HEK293 (cell line): ENCODE measurements at regions of chr19 and their contacts with region 1.

Region 1: DNA sequence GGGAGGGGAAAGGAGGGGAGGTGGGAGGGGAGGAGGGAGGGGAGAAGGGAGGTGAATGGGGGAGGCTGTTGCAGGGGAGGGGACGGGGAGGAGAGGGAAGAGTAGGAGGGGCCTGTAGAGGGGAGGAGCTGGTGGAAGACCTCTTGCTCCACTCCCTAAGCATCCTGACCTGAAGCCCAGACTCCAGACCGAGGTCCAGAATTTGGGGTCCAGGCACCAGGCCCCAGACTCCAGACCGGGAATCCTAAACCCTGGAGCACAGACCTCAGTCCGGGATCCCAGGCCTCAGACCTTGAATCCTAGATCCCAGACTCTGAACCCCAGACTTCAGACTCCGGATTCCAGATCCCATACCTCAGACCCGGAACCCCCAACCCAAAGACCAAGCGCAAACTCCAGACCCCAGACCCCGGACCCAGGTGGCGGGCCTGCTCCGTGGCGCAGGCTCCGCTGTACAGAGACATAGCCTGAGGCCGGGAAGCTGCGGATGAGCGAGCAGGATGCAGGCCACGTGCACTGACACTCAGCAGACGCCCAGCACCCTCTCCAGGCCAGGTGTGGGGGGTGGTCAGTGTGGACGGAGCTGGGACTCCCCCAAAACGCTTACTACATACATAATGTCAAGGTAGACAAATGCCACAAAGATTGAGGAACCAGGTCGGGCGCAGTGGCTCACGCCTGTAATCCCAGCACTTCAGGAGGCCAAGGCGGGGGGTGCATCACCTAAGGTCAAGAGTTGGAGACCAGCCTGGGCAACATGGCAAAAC is 710 bp upstream of the BTBD2 start:
- H3K4me3 ChIP-seq: no peak overlapping the region
- H3K27ac ChIP-seq: 0 out of 2 replicates have a peak overlapping the region, but pooled peaks have one; percentile 16
- H3K4me1 ChIP-seq: no peaks in the 10 kb centered on the region
- CTCF ChIP-seq: no peak

Region 2: GRCh38 chr19:2041683-2042484 is 25.7 kb after region 1 on chr19:
- CTCF ChIA-PET with region 1: interaction called, 8 read pairs
- POLR2A ChIA-PET with region 1: interaction called, 11 read pairs
- H3K4me3 ChIP-seq: peak overlapping the region; percentile 14; the same call in 1 of the 2 replicates
- H3K27ac ChIP-seq: peak overlapping the region; percentile 90
- H3K4me1 ChIP-seq: peaks cover 13% of the 10 kb centered on the region
- CTCF ChIP-seq: no peak

Region 3: GRCh38 chr19:2113439-2114211 is 97.4 kb after region 1 on chr19:
- CTCF ChIA-PET with region 1: no interaction called
- POLR2A ChIA-PET with region 1: no interaction called
- H3K4me3 ChIP-seq: no peak overlapping the region
- H3K27ac ChIP-seq: no peak overlapping the region
- H3K4me1 ChIP-seq: no peaks in the 10 kb centered on the region
- CTCF ChIP-seq: no peak